Endothelial cell of umbilical vein (primary cell): ENCODE measurements at regions of chr15 and their contacts with region 1.

Region 1: DNA sequence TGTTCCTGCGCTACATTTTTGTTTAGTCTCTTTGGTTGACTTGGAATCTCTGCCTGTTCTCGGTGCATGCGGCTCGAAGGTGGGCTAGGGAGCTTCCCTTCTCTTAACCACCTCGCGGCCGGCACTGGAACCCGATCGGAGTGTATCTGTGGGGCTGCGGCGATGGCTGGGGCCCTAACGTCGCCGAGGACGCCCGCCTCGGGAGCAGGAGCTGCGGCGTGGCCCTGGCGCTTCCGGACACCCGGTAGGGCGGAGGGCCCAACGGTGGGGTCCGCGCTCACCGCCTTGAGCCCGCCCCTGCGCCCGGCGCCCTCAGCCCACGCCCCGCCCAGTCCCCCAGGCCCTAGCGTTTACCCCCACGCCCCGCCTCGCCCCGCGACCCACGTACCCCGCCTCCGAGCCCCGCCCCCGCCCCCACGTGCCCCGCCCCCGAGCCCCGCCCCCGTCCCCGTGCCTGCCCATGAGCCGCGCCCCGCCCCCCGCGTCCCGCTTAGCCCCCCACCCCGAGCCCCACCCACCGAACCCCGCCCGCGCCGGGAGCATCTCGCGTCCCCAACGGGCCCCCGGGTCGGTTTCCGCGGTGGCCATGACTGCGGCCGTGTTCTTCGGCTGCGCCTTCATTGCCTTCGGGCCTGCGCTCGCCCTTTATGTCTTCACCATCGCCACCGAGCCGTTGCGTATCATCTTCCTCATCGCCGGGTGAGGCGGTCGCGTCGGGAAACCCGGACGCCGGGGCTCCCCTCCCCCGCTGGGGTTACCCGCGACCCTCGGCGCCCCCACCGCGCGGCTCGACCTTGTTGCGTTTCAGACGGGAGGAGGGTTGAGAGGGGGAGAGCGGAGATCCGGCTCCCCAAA is at the start of gene APH1B:
- DNase-seq: peak; percentile 75
- H3K4me3 ChIP-seq: peak within 1 kb of the TSS; percentile 68 to 85 (median 73)
- H3K27ac ChIP-seq: peak within 1 kb of the TSS; percentile 33
- H3K4me1 ChIP-seq: peaks cover 9% of the 10 kb centered on the region
- H3K27me3 ChIP-seq: no peaks in the 10 kb centered on the region
- CTCF ChIP-seq: no peak
- POLR2A ChIP-seq: peak; percentile 83
- total RNA-seq, gene APH1B: 24.6 and 28.8 TPM in 2 replicates

Region 2: GRCh38 chr15:63157118-63157843 is 120.0 kb before region 1 on chr15 and contains the start of gene RPS27L:
- CTCF ChIA-PET with region 1: interaction called, 4 read pairs
- POLR2A ChIA-PET with region 1: interaction called, 9 read pairs
- dilution Hi-C with region 1: no loop called
- intact Hi-C with region 1: loop called (anchors 2 kb)
- DNase-seq: peak; percentile 92
- H3K4me3 ChIP-seq: peak within 1 kb of the TSS; percentile 54 to 98 (median 88)
- H3K27ac ChIP-seq: peak within 1 kb of the TSS; percentile 71
- H3K4me1 ChIP-seq: peaks cover 11% of the 10 kb centered on the region
- H3K27me3 ChIP-seq: no peaks in the 10 kb centered on the region
- CTCF ChIP-seq: no peak
- POLR2A ChIP-seq: peak; percentile 99
- total RNA-seq, gene RPS27L: 338 and 345 TPM in 2 replicates

Region 3: GRCh38 chr15:63166219-63166618 is 111.0 kb before region 1 on chr15:
- CTCF ChIA-PET with region 1: interaction called, 12 read pairs
- POLR2A ChIA-PET with region 1: no interaction called
- dilution Hi-C with region 1: no loop called
- intact Hi-C with region 1: no loop called
- DNase-seq: no peak
- H3K4me3 ChIP-seq: no peak overlapping the region
- H3K27ac ChIP-seq: no peak overlapping the region
- H3K4me1 ChIP-seq: no peaks in the 10 kb centered on the region
- H3K27me3 ChIP-seq: no peaks in the 10 kb centered on the region
- CTCF ChIP-seq: no peak
- POLR2A ChIP-seq: no peak

Region 4: GRCh38 chr15:63244399-63244798 is 32.9 kb before region 1 on chr15:
- CTCF ChIA-PET with region 1: no interaction called
- POLR2A ChIA-PET with region 1: interaction called, 5 read pairs
- dilution Hi-C with region 1: no loop called
- intact Hi-C with region 1: loop called (anchors 2 kb)
- DNase-seq: peak; percentile 92
- H3K4me3 ChIP-seq: peak overlapping the region in 1 of 3 experiments; percentile 33
- H3K27ac ChIP-seq: peak overlapping the region; percentile 90
- H3K4me1 ChIP-seq: peaks cover 21% of the 10 kb centered on the region
- H3K27me3 ChIP-seq: no peaks in the 10 kb centered on the region
- CTCF ChIP-seq: no peak
- POLR2A ChIP-seq: no peak